ENCODE measurements at regions of chr16 and their contacts with region 1.

Region 1: DNA sequence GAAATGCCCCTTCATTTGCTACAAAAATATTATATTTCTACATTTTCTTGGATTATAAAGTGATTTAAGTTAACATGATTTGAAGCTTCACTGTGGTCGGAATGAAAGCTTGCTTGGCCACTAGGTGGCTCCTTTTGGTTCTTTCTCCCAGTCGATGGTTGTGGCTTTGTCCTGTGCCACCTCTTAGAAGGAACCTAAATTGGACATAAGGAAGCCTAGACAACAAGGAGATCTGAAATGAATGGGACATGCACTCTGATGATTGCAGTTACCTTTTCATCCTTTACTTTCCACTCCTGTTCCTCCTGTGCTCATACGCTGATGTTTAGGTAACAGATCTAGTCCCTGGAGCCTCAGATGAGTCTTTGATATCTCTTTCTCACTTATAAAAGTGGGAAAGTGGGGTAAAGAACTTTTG is 39.2 kb downstream of the FTO start:
- DNase-seq: peak; percentile 55
- ATAC-seq: peak; percentile 81
- H3K4me3 ChIP-seq: no peak overlapping the region
- H3K27ac ChIP-seq: no peak overlapping the region
- H3K4me1 ChIP-seq: peaks cover 26 to 28% of the 10 kb centered on the region in 2 experiments
- H3K27me3 ChIP-seq: no peaks in the 10 kb centered on the region
- CTCF ChIP-seq: peak; percentile 31 to 83 (median 80); a peak in 4 of 6 replicates
- POLR2A ChIP-seq: no peak
- RAD21 ChIP-seq: peak; percentile 45

Region 2: DNA sequence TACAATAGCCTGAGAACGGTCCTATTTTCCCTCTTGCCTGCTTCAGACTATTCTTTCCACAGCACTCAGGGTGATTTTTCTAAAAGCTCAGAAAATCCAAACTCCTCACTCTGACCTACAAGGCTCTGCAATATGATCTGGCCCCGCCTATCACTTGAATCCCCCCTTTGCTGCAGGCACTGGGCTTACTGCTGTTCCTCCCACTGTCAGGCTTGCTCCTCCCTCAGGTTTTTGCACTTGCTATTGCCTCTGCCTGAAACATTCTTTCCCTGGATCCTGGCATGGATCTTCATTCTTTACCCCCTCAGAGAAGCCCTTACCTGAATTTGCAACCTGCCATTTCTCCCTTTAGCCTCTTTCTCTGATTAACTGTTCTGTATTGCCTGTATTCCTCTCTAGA is 91.8 kb before region 1 on chr16:
- CTCF ChIA-PET with region 1: no interaction called
- POLR2A ChIA-PET with region 1: no interaction called
- RAD21 ChIA-PET with region 1: no interaction called
- intact Hi-C with region 1: no loop called
- DNase-seq: no peak
- ATAC-seq: no peak
- H3K4me3 ChIP-seq: no peak overlapping the region
- H3K27ac ChIP-seq: no peak overlapping the region
- H3K4me1 ChIP-seq: no peaks in the 10 kb centered on the region
- H3K27me3 ChIP-seq: no peaks in the 10 kb centered on the region
- CTCF ChIP-seq: no peak
- POLR2A ChIP-seq: no peak
- RAD21 ChIP-seq: no peak

Region 3: DNA sequence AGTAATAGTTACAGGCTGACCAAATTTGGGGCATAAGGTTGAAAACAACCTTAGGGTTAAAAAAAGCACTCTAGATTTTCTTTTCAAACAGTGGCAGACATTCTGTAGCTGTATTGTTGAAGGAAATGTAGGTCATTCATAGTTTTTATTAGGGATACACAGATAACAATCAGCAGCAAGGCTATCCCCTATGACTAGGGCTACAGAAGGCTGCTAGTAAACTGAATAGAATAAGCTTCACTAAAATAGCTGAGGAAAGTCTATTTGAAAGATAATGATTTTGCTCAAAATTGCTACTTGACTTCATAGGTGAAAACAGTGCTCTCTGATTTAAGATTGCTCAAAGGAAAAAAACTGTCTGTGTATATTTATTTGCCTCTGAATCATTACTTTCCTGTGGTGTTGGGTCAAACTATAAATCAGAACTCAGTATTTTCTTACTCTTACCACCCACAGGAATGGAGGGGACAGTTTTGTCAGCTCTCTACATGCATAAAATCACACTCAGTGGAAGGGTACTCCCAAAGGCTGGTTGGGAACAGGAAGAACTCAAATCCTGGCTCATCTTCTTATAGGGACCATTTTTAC is 64.3 kb before region 1 on chr16:
- CTCF ChIA-PET with region 1: no interaction called
- POLR2A ChIA-PET with region 1: no interaction called
- RAD21 ChIA-PET with region 1: no interaction called
- intact Hi-C with region 1: no loop called
- DNase-seq: no peak
- ATAC-seq: no peak
- H3K4me3 ChIP-seq: no peak overlapping the region
- H3K27ac ChIP-seq: no peak overlapping the region
- H3K4me1 ChIP-seq: no peaks in the 10 kb centered on the region
- H3K27me3 ChIP-seq: no peaks in the 10 kb centered on the region
- CTCF ChIP-seq: no peak
- POLR2A ChIP-seq: no peak
- RAD21 ChIP-seq: no peak

Region 4: DNA sequence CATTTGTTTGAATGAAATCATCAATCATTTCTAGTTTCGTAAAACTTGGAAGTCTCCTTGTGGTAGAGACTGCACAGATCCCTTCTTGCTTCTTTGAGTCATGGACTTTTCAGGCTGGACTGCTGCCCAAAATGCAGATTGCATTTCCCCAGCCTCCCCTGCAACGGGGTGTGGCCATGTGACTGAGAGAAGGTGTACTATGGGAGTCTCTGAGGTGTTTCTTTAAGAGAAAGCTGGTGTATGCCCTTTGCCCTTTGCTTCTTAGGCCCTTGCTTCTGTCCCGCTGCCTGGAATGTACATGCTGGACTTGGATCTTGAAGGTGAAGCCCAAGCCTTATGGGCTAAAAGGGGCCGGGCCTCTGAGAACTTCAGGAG is 12.4 kb after region 1 on chr16:
- CTCF ChIA-PET with region 1: interaction called, 24 read pairs
- POLR2A ChIA-PET with region 1: no interaction called
- RAD21 ChIA-PET with region 1: no interaction called
- intact Hi-C with region 1: no loop called
- DNase-seq: no peak
- ATAC-seq: no peak; the same call in 1 of the 2 replicates
- H3K4me3 ChIP-seq: no peak overlapping the region
- H3K27ac ChIP-seq: no peak overlapping the region
- H3K4me1 ChIP-seq: peaks cover 8 to 9% of the 10 kb centered on the region in 2 experiments; a peak in 3 of 4 replicates
- H3K27me3 ChIP-seq: no peaks in the 10 kb centered on the region
- CTCF ChIP-seq: no peak
- POLR2A ChIP-seq: no peak
- RAD21 ChIP-seq: no peak